ENCODE measurements at regions of chr5 and their contacts with region 1.

Region 1: GRCh38 chr5:9715891-9716335 is 85.8 kb upstream of the TAS2R1 start:
- DNase-seq: no peak
- ATAC-seq: no peak
- H3K4me3 ChIP-seq: no peak overlapping the region
- H3K27ac ChIP-seq: no peak overlapping the region
- H3K4me1 ChIP-seq: no peaks in the 10 kb centered on the region
- H3K27me3 ChIP-seq: no peaks in the 10 kb centered on the region
- CTCF ChIP-seq: no peak
- EP300 ChIP-seq: no peak
- POLR2A ChIP-seq: no peak
- RAD21 ChIP-seq: no peak

Region 2: GRCh38 chr5:9733486-9733885 is 17.6 kb after region 1 on chr5:
- CTCF ChIA-PET with region 1: no interaction called
- POLR2A ChIA-PET with region 1: no interaction called
- in situ Hi-C with region 1: no loop called
- intact Hi-C with region 1: loop called (anchors 1 kb)
- DNase-seq: no peak
- ATAC-seq: no peak
- H3K4me3 ChIP-seq: no peak overlapping the region
- H3K27ac ChIP-seq: no peak overlapping the region
- H3K4me1 ChIP-seq: no peaks in the 10 kb centered on the region
- H3K27me3 ChIP-seq: no peaks in the 10 kb centered on the region; a peak in 1 of 5 replicates
- CTCF ChIP-seq: no peak
- EP300 ChIP-seq: no peak
- POLR2A ChIP-seq: no peak
- RAD21 ChIP-seq: no peak

Region 3: DNA sequence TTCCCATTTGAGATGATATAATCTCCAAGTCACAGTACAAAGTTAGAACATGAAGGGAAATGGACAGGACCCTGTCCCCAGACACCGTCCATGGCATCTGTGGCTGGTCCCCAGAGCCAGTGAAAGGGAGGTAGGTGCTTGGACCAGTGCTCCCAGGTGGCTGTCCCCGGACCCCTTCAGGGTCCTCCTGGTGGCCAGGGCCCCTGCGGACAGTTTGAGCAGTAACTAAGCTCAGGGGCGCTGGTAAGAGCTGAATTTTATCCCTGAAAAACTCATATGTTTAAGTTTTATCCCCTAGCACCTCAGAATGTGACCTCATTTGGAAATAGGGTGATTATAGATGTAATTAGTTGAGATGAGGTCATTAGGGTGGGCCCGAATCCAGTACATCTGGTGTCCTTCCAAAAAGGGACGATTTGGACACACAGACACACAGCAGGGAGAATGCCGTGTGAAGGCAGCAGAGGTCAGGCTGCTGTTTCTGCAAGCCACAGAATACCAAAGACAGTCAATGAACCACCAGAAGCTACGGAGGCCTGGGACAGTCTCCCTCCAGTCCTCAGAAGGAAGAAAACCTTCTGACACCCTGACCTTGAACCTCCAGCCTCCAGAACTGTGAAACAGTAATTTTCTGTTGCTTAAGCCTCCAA is 348.8 kb after region 1 on chr5:
- CTCF ChIA-PET with region 1: no interaction called
- POLR2A ChIA-PET with region 1: no interaction called
- in situ Hi-C with region 1: no loop called
- intact Hi-C with region 1: no loop called
- DNase-seq: no peak
- ATAC-seq: peak; percentile 38; the same call in 1 of the 3 replicates
- H3K4me3 ChIP-seq: no peak overlapping the region
- H3K27ac ChIP-seq: no peak overlapping the region
- H3K4me1 ChIP-seq: no peaks in the 10 kb centered on the region; a peak in 1 of 5 replicates
- H3K27me3 ChIP-seq: peaks cover 2 to 10% of the 10 kb centered on the region in 2 experiments; a peak in 3 of 5 replicates
- CTCF ChIP-seq: no peak
- EP300 ChIP-seq: no peak
- POLR2A ChIP-seq: no peak
- RAD21 ChIP-seq: no peak

Measured in K562 (cell line).